Activated naive CD4-positive, alpha-beta T cell treated with anti-CD3 and anti-CD28 coated beads, Interleukin-2, amount 10 ng/mL, durations not matched to agents 7 days and 5 days (primary cell): ENCODE measurements at regions of chr18 and their contacts with region 1.

Region 1: DNA sequence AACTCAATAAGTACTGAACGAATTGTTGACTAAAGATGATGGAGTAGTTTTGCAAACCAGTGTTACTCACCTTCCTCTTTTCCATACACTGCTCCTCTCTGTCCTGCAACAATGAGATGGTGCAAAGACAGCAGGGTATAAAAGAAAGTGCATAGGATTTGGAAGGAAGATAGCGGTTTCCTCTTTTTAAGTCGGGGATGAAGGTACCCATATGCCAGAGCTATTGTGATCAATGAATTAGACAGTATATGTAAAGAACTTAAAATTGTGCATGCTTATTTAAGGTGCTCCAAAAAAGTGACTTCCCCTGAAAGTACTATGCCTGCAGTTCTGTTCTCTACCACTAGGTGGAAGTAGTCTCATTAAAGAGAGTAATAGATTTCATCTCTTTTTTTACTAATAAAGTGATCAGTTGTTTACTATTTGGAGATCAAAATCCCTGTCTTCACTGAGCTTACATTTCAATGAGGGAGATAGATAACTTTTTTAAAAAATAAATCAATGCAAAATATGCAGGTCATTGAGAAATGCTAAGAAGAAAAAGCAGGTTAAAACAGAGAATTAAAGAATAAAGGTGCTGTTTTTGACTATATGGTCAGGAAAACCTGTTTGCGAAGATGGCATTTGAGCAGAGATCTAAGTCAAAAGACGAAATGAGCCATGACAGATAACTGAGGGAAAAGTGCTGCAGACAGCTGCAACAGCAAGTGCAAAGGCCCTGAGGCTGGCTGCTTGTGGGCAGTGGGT is 339.7 kb upstream of the SLC14A2 start:
- DNase-seq: no peak
- H3K4me3 Mint-ChIP-seq: no peak overlapping the region
- H3K27ac Mint-ChIP-seq: no peak overlapping the region
- H3K4me1 Mint-ChIP-seq: no peaks in the 10 kb centered on the region
- H3K27me3 Mint-ChIP-seq: no peaks in the 10 kb centered on the region

Region 2: DNA sequence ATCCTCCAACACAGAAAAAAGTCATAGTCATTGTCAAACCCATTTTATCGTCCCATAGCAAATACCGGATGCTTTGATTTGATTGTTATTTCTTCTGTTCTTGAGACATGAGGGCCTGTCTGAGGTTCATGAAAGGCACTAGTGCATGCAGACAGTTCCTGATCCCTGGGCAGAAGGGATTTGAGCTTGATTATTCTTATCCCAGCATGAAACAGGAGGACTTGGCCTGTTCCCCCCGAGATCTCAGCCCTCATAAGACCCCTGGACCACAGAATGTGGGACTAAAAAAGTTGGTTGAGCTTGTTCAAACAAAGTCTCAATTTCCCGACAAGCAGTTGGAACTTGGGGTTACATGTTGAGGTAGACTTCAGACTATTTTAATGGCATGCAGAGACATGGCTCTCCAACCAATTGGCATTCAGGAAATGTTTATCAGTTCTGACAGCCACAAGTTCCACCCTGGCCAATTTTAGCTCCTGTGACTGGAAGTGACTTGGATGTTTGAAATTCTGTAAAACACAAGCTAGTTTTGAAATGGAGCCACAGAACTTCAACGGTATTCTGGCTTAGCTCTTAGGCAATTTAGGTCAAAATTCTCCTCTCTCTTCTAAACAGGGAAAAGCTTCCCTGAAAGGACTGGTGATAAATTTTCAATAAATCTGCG is 27.2 kb before region 1 on chr18:
- CTCF ChIA-PET with region 1: no interaction called
- DNase-seq: no peak
- H3K4me3 Mint-ChIP-seq: no peak overlapping the region
- H3K27ac Mint-ChIP-seq: no peak overlapping the region
- H3K4me1 Mint-ChIP-seq: no peaks in the 10 kb centered on the region
- H3K27me3 Mint-ChIP-seq: peaks cover 7% of the 10 kb centered on the region

Region 3: GRCh38 chr18:45384137-45384961 is 108.8 kb after region 1 on chr18:
- CTCF ChIA-PET with region 1: interaction called, 14 read pairs
- DNase-seq: peak; percentile 50
- H3K4me3 Mint-ChIP-seq: no peak overlapping the region
- H3K27ac Mint-ChIP-seq: no peak overlapping the region
- H3K4me1 Mint-ChIP-seq: no peaks in the 10 kb centered on the region
- H3K27me3 Mint-ChIP-seq: peaks cover 4% of the 10 kb centered on the region